MCF 10A (cell line): ENCODE measurements at regions of chr2 and their contacts with region 1.

Region 1: DNA sequence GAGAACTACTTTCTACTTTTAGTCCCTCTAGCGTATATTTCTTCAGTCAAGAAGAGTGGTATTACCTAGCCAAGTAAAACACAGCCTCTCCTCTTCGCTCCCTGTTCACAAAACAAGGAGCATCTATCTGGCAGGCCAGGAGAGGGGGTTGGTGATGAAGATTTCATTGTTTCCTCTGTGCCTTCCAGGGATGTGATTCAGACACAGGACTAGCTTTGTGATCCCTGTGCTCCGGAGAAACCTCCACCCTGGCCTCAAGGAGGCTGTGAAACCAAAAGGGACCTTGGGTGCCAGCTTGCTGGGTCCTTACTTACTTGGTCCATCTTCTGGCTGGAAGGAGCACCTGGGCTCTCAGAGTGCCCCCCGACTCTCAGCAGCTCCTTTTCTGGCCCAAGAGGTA is 5.7 kb downstream of the RHOB start:
- DNase-seq: peak; percentile 91
- H3K4me3 Mint-ChIP-seq: no peak overlapping the region
- H3K27ac Mint-ChIP-seq: no peak overlapping the region
- H3K4me1 Mint-ChIP-seq: no peaks in the 10 kb centered on the region
- H3K27me3 Mint-ChIP-seq: no peaks in the 10 kb centered on the region
- CTCF ChIP-seq: peak; percentile 52

Region 2: GRCh38 chr2:20514596-20515269 is 62.2 kb after region 1 on chr2:
- CTCF ChIA-PET with region 1: no interaction called
- POLR2A ChIA-PET with region 1: no interaction called
- intact Hi-C with region 1: no loop called
- DNase-seq: peak; percentile 94
- H3K4me3 Mint-ChIP-seq: peak overlapping the region; percentile 4
- H3K27ac Mint-ChIP-seq: peak overlapping the region; percentile 96
- H3K4me1 Mint-ChIP-seq: peaks cover 35% of the 10 kb centered on the region
- H3K27me3 Mint-ChIP-seq: no peaks in the 10 kb centered on the region
- CTCF ChIP-seq: no peak

Region 3: DNA sequence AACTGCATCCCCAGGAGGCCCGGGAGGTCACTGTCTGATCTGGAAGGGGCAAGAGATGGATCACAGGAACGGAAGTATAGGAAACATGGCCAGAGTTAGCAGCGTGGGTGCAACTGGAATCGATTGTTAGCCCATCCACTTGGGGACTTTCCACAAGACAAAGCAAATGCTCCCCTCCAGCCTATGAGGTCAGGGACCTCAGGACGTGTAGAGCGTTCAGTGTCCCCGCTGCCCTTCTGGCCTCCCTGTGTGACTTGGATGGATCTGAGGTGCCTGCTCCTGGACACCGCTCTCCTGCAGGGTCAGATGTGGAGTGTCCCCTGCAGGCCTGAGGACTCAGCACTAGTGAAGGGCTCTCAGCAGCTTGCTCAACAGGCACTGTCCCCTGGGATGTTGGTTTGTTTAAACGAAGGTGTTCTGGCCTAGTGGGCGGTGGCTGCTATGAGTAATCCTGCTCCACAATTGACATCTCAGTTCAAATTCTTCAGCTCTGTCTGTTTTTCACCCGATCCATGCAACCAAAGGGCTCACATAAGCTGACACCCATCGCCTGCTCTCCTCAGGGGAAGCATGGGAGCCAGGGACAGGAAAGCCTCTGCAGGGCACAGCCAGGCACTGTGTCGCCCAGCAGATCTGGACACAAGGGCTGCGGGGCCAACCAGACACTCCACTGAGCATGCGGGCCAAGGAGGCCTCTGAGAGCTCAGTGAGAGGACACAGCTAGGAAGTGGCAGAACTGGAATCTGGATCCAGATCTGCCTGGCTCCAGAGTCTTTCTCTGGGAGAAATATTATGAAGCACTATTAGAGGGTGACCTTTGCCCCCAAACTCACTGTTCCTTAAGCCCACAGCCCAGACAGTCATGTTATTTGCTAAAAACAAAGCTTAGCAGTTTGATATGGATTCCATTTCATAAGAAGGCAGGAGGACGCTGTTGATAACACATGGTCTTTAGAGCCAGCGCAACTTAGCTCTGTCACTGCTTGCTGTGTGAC is 72.8 kb after region 1 on chr2:
- CTCF ChIA-PET with region 1: no interaction called
- POLR2A ChIA-PET with region 1: no interaction called
- intact Hi-C with region 1: loop called (anchors 1 kb)
- DNase-seq: peak; percentile 81
- H3K4me3 Mint-ChIP-seq: no peak overlapping the region
- H3K27ac Mint-ChIP-seq: peak overlapping the region; percentile 29
- H3K4me1 Mint-ChIP-seq: peaks cover 13% of the 10 kb centered on the region
- H3K27me3 Mint-ChIP-seq: no peaks in the 10 kb centered on the region
- CTCF ChIP-seq: no peak

Region 4: DNA sequence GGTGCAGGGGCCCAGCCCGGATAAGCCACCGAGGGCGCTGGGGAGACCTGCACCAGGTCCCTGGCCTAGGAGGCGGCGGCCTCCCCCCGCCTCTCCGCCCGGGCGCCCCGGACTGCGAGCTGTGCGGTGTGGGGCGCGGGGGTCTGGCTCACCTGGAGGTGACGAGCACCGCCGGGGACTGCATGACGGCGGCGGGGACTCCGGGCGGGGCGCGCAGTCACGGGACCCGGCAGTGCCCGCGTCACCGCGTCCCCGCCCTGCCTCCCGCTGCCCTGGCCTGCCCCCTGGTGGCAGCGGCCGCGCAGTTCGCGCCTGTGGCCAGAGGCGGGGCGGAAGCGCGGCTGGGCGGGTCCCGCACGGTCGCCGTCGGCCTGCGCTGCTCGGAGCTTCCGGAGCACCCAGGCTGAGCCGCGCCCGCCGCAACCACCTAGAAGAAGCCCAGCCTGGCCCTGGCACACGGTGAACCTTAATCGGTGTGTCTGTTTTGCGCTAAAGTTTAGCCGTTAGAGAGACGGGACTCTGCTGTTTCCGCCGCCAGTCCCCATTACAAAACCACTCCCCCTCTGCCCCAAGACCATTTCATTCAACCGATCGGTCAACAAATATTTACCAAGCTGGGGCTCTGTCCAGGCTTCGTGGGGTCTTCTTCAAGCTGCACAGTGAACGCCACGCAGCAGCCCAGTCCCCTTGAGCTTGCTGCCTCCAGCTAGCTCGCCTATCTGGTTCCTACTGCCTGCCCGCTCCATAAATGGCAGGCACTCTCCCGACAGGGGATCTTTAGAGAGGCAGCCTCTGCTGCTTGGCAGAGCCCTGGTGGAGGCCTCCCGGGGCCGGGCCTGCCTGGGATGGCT is 198.6 kb after region 1 on chr2 and contains the start of gene HS1BP3:
- CTCF ChIA-PET with region 1: interaction called, 13 read pairs
- POLR2A ChIA-PET with region 1: interaction called, 5 read pairs
- intact Hi-C with region 1: no loop called
- DNase-seq: peak; percentile 81
- H3K4me3 Mint-ChIP-seq: peak within 1 kb of the TSS; percentile 82
- H3K27ac Mint-ChIP-seq: peak within 1 kb of the TSS; percentile 62
- H3K4me1 Mint-ChIP-seq: peaks cover 22% of the 10 kb centered on the region
- H3K27me3 Mint-ChIP-seq: peaks cover 12% of the 10 kb centered on the region
- CTCF ChIP-seq: peak; percentile 89
- total RNA-seq, gene HS1BP3: 10.0 and 25.1 TPM in 2 replicates